Lower leg skin (tissue), 4 donors: ENCODE measurements at regions of chr18 and their contacts with region 1.

Region 1: GRCh38 chr18:8890957-8891464 is 185.7 kb downstream of the MTCL1 start:
- DNase-seq: peak in 1 of 2 donors; percentile 39
- H3K4me3 ChIP-seq: no peak overlapping the region
- CTCF ChIP-seq: no peak
- POLR2A ChIP-seq: no peak

Region 2: GRCh38 chr18:8426401-8426800 is 464.6 kb before region 1 on chr18:
- intact Hi-C with region 1: no loop called
- DNase-seq: no peak
- H3K4me3 ChIP-seq: no peak overlapping the region
- CTCF ChIP-seq: no peak
- POLR2A ChIP-seq: no peak

Region 3: GRCh38 chr18:8828300-8828699 is 62.7 kb before region 1 on chr18:
- intact Hi-C with region 1: loop called (anchors 10 kb)
- DNase-seq: no peak
- H3K4me3 ChIP-seq: no peak overlapping the region
- CTCF ChIP-seq: no peak
- POLR2A ChIP-seq: no peak